Right ventricle myocardium inferior (tissue), 1 donor: ENCODE measurements at regions of chr10 and their contacts with region 1.

Region 1: DNA sequence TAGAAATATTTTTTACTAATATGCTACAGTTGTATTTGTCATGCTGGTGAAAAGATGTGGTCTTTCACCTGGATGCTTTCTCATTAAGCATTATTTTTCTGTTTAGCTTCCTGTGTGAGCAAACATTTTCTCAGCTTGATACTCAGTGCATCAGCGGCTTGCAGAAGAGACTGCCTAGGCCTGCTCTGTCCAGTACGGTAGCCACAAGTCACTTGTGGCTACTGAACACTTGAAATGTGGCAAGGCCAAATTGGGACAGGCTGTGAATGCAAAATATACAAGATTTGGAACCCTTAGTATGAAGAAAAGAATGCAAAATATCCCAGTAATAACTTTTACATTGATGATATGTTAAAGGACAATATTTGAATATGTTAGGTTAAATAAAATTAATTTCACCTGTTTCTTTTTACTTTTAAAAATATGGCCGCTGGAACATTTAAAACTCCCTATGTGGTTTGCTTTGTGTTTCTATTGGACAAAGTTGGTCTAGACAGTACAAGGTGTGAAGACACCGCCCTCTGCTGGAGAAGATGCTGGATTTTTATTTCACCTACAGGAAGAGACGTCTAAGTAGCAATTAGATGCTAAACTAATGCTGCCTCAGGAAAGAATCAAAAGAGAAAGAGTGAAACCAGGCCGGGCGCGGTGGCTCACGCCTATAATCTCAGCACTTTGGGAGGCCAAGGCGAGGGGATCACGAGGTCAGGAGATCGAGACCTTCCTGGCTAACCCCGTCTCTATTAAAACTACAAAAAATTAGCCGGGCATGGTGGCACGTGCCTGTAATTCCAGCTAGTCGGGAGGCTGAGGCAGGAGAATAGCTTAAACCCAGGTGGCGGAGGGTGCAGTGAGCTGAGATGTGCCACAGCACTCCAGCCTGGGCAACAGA is 5.3 kb downstream of the SRGN start:
- DNase-seq: peak; percentile 73
- ATAC-seq: peak; percentile 85

Region 2: DNA sequence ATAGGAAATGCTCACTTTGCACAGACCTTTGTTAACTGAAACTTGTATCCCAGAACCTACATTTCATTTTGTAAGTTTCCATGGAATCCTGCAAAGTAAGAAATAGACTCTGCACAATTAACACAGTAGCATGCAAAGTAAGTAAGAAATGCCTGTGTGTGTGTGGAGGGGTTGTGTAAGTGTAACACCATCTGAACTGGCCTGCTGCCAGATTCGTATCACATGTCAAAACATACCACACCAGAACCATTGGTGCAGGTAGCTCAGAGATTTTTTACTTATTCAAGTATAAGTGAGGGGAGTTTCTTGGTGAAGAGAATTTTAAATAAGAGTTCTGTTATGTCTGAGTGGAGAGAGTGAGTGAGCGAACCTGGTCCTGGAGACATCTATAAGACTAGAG is 155.1 kb before region 1 on chr10:
- intact Hi-C with region 1: no loop called
- DNase-seq: no peak
- ATAC-seq: no peak

Region 3: GRCh38 chr10:68955832-68956532 is 137.2 kb before region 1 on chr10 and contains the start of gene DDX21:
- intact Hi-C with region 1: loop called (anchors 2 kb)
- DNase-seq: peak; percentile 93
- ATAC-seq: peak; percentile 98
- total RNA-seq, gene DDX21: 19.6 TPM

Region 4: GRCh38 chr10:68988530-68989316 is 104.5 kb before region 1 on chr10 and contains the start of gene KIFBP:
- intact Hi-C with region 1: loop called (anchors 5 kb)
- DNase-seq: peak; percentile 96
- ATAC-seq: peak; percentile 96
- total RNA-seq, gene KIFBP: 52.2 TPM

Region 5: GRCh38 chr10:69004821-69005220 is 88.4 kb before region 1 on chr10:
- intact Hi-C with region 1: loop called (anchors 1 kb)
- DNase-seq: no peak
- ATAC-seq: peak; percentile 31

Region 6: DNA sequence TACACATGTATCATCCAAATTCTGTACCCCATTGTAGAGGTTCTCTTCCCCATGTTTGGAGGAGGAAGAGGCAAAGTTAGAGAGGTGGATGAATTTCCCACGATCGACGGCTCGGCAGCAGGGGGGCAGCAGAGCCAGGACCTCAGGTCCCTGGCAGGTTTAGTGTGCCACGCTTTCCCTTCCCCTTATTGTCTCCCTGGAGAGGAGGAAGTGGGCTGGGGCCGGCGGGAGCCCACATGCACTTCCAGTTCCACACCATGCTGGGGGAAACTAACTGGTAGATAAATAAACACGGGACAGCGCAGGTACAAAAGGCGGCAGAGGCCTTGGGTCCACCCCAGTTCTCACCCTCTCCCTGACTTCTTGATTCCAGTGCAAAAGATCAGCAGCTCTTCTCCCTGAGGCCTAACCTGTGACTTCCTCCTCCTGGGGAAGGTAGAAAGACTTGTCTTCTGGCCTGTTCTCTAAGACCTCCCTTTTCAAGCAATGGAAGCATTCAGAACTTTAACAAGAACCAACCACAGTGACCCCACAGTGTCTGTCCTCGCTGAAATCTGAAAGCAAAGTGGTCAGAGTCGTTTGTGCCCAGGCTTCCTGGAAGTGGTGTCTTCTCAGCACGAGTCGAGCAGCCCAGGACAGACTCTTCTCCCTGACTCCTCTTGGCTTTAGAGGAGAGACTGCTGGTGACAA is 35.8 kb before region 1 on chr10:
- intact Hi-C with region 1: loop called (anchors 2 kb)
- DNase-seq: peak; percentile 84
- ATAC-seq: no peak